ENCODE measurements at regions of chr20 and their contacts with region 1.

Region 1: DNA sequence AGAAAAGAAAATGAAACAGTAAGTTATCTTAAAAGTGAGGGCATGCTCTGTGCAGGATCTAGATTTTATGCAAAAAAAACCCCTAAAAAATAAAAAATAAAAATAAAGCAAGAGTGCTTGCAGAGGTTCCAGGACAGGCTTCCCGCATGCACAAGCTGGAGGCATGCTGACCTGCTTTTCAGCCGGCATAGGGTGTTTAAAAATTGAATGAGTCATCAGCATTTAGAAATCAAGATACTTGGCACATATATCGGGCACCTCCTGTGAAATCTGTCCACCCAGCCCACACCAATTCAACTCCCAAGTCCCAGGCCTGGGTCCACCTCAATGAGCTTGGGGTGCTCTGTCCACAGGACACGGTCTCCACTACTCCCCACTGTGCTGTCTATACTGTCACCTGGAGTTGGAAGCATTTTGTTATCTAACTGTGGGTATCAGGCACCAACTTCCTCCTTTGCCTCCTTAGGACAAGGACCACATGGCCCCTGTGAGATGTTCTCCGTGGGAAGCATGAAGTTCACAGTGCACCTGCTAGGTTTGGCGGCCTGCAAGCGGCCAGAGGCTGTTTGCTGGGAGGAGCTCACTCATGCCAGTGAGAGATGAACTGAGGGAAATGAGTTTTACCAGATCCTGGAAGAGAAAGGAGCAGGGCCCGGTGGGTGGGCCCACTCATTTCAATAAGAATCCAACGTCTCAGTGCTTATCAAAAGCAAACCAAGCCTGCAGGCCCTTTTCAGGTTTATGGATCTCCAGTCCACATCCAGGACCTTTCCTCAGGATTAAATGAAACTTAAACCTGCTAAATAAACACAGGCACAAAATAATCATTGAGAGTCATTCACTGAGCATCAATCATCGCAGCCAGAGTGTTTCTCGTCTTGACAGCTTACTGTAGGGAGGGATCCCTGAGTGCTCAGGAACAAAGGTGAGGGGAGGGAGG is 121.1 kb downstream of the FOXA2 start:
- DNase-seq: no peak
- H3K4me3 Mint-ChIP-seq: no peak overlapping the region
- H3K27ac Mint-ChIP-seq: no peak overlapping the region
- H3K4me1 Mint-ChIP-seq: peaks cover 24% of the 10 kb centered on the region
- H3K27me3 Mint-ChIP-seq: no peaks in the 10 kb centered on the region
- CTCF ChIP-seq: no peak

Region 2: GRCh38 chr20:22312744-22313346 is 150.4 kb before region 1 on chr20:
- CTCF ChIA-PET with region 1: no interaction called
- intact Hi-C with region 1: no loop called
- DNase-seq: peak; percentile 2
- H3K4me3 Mint-ChIP-seq: no peak overlapping the region
- H3K27ac Mint-ChIP-seq: no peak overlapping the region
- H3K4me1 Mint-ChIP-seq: no peaks in the 10 kb centered on the region
- H3K27me3 Mint-ChIP-seq: peaks cover 3% of the 10 kb centered on the region
- CTCF ChIP-seq: no peak

Region 3: DNA sequence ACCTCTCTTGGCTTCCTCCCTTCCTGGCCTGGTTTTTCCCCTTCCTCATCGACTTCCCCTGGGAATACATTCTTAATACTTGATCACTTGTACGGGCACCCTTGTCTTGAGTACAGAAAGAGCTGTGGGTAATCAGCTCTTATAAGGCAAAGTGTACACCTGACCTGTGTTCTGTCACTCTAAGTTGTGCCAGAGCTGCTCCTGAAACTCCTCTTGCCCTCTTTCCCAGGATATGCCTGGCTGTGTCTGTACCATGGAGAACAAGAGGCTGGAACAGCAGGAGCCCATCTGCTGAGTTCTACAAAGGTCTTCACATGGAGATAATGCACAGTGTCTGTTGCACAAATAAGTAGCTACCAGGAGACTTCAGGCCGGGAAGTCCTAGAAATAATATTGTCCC is 11.0 kb after region 1 on chr20:
- CTCF ChIA-PET with region 1: no interaction called
- intact Hi-C with region 1: no loop called
- DNase-seq: no peak
- H3K4me3 Mint-ChIP-seq: no peak overlapping the region
- H3K27ac Mint-ChIP-seq: no peak overlapping the region
- H3K4me1 Mint-ChIP-seq: no peaks in the 10 kb centered on the region
- H3K27me3 Mint-ChIP-seq: no peaks in the 10 kb centered on the region
- CTCF ChIP-seq: no peak

Region 4: DNA sequence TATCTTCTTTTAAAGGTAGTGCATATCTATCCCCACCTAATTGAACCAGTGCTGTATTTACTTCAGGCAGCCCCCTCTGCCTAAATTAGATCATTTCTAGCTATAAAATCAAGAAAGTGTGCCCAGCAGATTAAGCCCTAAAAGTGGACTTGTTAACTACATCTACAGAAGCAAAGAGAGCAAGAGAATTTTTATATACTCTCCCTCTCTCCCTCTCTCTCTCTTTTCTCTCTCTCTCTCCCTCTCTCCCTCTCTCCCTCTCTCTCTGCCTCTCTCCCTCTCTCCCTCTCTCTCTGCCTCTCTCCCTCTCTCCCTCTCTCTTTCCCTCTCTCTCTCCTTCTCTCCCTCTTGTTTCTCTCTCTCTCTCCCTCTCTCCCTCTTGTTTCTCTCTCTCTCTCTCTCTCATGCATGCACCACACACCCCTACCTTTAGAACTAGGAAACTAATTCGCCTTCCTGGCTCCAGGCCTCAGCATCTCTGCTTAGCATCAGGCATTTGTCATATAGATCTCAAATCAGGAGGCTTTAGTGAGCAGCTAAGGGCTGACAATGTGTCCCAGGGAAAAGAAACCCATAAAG is 49.8 kb after region 1 on chr20:
- CTCF ChIA-PET with region 1: interaction called, 16 read pairs
- intact Hi-C with region 1: no loop called
- DNase-seq: no peak
- H3K4me3 Mint-ChIP-seq: no peak overlapping the region
- H3K27ac Mint-ChIP-seq: no peak overlapping the region
- H3K4me1 Mint-ChIP-seq: no peaks in the 10 kb centered on the region
- H3K27me3 Mint-ChIP-seq: no peaks in the 10 kb centered on the region
- CTCF ChIP-seq: no peak

Region 5: DNA sequence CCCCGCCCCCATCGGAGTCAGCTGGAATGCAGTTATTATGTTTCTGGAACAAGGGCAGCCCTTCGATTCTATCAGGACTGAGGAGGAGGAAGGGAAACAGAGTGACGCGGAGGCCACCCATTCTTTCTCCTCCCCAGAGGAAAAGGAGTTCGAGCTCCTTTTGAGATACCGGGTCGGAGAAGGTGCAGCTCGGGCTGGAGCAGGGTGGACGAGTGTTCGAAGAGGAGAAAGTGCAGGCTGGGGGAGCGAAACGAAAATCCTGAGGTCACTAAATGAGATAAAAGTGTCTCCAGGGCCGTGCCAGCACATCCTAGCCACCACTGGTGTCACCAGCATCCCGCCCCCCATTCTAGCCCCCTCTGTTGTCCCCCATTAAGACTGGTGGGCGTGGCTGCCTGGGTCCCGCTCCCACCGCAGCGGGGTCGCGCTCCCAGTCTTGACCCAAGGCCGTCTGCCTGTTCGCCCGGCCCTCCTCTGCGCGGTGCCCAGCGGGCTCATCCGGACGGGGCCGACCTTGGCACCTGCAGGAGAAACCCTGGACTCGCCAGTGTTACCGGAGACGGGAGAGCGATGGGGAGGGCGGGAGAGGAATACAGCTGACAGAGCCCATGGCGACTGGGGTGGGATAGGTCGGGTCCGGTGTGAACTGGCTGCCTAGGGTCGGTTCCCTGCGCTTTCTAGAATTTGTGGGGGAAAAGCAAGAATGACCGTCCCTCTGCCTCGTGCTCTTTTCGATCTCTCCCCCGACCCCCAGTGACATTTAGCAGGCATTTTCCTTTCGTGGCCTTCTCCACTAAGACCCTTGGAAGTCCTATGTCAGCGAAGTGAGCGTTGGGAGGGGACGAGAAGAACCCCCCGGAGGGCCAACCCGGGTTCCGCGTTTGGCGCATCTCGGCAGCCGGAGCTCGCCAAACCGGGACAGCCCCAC is 105.0 kb after region 1 on chr20:
- CTCF ChIA-PET with region 1: no interaction called
- intact Hi-C with region 1: loop called (anchors 10 kb)
- DNase-seq: no peak
- H3K4me3 Mint-ChIP-seq: no peak overlapping the region
- H3K27ac Mint-ChIP-seq: no peak overlapping the region
- H3K4me1 Mint-ChIP-seq: no peaks in the 10 kb centered on the region
- H3K27me3 Mint-ChIP-seq: peaks cover 13% of the 10 kb centered on the region
- CTCF ChIP-seq: no peak

Region 6: GRCh38 chr20:22586645-22587310 is 123.5 kb after region 1 on chr20:
- CTCF ChIA-PET with region 1: no interaction called
- intact Hi-C with region 1: no loop called
- DNase-seq: peak; percentile 51
- H3K4me3 Mint-ChIP-seq: no peak overlapping the region
- H3K27ac Mint-ChIP-seq: no peak overlapping the region
- H3K4me1 Mint-ChIP-seq: no peaks in the 10 kb centered on the region
- H3K27me3 Mint-ChIP-seq: peaks cover 10% of the 10 kb centered on the region
- CTCF ChIP-seq: peak; percentile 62

Region 7: GRCh38 chr20:22775671-22776139 is 312.5 kb after region 1 on chr20:
- CTCF ChIA-PET with region 1: no interaction called
- intact Hi-C with region 1: no loop called
- DNase-seq: no peak
- H3K4me3 Mint-ChIP-seq: no peak overlapping the region
- H3K27ac Mint-ChIP-seq: no peak overlapping the region
- H3K4me1 Mint-ChIP-seq: peaks cover 7% of the 10 kb centered on the region
- H3K27me3 Mint-ChIP-seq: no peaks in the 10 kb centered on the region
- CTCF ChIP-seq: no peak